ENCODE measurements at regions of chr19 and their contacts with region 1.

Region 1: DNA sequence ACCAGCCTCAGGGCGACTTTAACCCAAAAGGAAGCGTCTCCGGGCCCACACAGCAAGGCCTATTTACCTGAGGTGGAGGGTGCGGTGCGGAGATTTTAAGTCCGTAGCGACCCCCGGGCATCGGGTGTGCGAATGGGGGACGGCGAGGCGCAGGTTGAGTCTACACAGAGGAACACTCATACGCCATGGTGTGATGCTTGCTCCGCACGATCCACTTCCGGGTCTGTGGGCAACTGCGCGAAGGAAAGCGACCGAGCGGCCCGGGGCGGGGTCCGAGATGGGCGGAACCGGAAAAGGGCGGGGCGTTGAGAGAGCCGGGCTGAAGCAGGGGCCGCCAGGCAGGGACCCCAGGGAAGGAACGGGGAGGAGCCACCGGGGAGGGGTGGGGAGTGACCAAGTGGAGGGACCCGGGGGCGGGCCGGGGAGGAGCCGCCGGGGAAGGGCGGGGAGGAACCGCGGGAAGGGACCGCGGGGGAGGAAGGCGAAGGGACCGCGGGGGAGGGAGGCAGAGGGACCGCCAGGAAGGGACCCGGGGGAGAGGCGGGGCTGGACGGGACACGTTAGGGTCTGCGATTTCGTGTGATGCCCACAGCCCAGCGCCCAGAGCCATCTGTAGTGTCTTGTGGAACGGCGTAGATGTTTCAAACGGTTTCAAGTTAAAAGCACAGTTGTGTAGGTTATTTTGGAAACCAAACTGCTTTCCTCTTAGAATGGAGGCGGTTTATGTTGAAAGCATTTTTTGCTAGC is at the start of gene ZNF160:
- DNase-seq: peak; percentile 97 to 100 (median 98)

Region 2: GRCh38 chr19:53158119-53158656 is 54.8 kb after region 1 on chr19:
- intact Hi-C with region 1: loop called (anchors 1 kb)
- DNase-seq: peak in 5 of 10 donors; percentile 9 to 86 (median 16)

Measured in posterior cingulate gyrus (tissue), 11 donors.